CD4-positive, alpha-beta T cell (primary cell): ENCODE measurements at regions of chr4 and their contacts with region 1.

Region 1: DNA sequence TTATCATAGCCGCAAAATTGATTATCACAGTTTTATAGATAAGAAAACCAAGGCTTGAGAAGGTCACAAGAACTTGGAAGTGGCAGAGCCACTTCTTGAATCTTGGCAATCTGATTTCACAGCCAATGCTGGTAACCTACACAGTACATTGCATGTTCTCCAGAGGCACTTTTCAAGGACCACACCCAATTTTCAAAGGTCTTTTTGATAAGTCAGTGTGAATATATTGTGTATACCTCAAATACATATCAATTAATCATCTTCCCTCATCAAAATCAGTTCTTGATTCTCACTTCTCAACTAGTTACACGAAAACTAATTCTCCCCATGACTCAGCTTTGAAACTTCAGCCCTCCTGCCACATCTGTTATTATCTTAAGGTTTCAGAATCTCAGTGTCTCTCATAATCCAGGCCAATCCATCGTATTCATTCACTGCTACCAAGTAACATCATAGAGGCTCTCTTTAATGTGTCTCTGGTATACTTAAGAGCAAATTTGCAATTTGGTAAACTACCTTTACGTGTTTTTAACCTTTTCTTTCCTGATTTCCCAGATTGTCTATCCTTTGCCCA is 16.8 kb downstream of the CAMK2D start:
- DNase-seq: no peak
- ATAC-seq: no peak
- H3K4me3 ChIP-seq: no peak overlapping the region
- H3K4me3 Mint-ChIP-seq: no peak overlapping the region
- H3K27ac ChIP-seq: no peak overlapping the region
- H3K27ac Mint-ChIP-seq: no peak overlapping the region
- H3K4me1 ChIP-seq: no peaks in the 10 kb centered on the region
- H3K4me1 Mint-ChIP-seq: peaks cover 37% of the 10 kb centered on the region
- H3K27me3 ChIP-seq: no peaks in the 10 kb centered on the region
- H3K27me3 Mint-ChIP-seq: no peaks in the 10 kb centered on the region
- CTCF ChIP-seq: no peak

Region 2: DNA sequence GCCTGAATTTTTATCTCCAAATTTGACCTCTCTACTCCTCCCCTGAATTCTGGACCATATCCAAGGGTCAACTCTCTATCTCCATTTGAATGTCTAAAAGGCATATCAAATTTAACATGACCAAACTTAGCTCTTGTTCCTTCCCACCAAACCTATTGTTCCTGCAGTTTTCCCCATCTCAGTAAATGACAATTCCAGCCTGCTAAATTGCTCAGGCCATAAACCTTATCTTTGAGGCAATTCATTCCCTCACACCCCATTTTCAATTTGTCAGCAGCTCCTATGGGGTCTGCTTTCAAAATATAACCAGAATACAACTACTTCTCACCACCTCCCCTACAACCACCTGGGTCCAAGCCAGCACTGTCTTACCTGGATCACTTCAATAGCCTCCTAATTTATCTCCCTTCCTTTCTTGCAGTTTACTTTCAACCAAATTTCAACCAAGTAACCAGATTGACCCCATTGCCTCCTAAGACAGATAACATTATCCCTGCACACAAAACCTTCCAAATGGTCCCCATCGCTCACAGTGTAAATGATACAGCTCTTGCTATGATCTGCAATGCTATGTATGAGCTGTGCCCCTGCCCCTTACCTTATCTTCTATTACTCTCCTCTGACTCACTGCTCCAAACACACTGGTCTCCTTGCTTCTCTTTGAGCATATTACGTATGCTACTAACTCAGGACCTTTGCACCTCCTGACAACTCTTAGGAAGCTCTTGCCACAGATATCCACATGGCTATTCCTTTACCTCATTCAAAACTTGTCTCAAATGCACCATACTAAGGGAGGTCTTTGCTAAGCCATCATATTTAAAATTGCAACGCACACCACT is 49.2 kb before region 1 on chr4:
- CTCF ChIA-PET with region 1: no interaction called
- POLR2A ChIA-PET with region 1: interaction called, 3 read pairs
- intact Hi-C with region 1: loop called in 1 of 2 experiments (anchors 5 kb)
- DNase-seq: no peak
- ATAC-seq: no peak
- H3K4me3 ChIP-seq: no peak overlapping the region
- H3K4me3 Mint-ChIP-seq: no peak overlapping the region
- H3K27ac ChIP-seq: no peak overlapping the region
- H3K27ac Mint-ChIP-seq: no peak overlapping the region
- H3K4me1 ChIP-seq: peaks cover 5% of the 10 kb centered on the region
- H3K4me1 Mint-ChIP-seq: peaks cover 20% of the 10 kb centered on the region
- H3K27me3 ChIP-seq: no peaks in the 10 kb centered on the region
- H3K27me3 Mint-ChIP-seq: no peaks in the 10 kb centered on the region
- CTCF ChIP-seq: no peak